Panc1 (cell line): ENCODE measurements at regions of chr16 and their contacts with region 1.

Region 1: GRCh38 chr16:53945996-53946395 is 242.0 kb downstream of the FTO start:
- DNase-seq: peak; percentile 5
- ATAC-seq: no peak
- H3K4me3 ChIP-seq: no peak overlapping the region
- H3K27ac ChIP-seq: no peak overlapping the region
- H3K4me1 ChIP-seq: no peaks in the 10 kb centered on the region
- H3K27me3 ChIP-seq: no peaks in the 10 kb centered on the region
- CTCF ChIP-seq: peak; percentile 65; the same call in 1 of the 2 replicates

Region 2: DNA sequence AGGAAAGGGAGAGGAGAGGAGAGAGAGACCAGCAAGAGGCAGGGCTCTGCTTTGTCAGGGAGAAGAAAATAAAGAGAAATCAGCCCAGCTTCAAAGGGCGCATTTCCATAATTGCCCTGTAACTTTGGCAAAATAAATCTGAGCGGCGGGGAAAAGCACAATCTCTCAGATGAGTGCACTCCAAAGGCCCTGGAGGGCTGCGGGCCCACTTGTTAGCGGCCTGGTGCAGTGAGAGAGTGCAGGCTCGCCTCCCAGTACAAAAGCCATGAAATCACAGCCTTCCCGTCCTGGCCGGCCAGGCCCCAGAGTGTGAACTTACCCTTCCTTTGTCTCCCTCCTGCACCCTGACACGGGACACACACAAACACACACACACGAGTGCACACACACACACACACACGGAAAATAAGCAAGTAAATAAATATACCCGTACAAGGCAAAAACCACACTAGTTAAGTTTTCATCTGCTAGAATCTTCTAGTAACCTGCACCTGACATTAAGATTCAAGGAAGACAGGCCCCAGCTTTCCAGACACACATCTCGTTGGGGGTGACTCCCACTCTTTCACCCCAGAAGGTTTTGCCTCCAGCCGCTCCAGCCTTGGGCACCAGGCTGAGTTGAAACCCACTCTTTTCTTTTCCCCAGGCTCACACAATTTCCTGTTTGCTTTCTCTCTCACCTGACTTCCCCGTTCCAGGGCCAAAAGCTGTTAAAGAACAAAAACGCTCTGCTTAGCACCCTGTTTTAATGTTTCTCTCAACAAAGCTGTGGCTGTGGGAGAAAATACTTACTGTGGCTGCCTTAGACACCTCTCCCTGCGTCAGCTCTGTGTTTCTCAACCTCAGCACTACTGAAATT is 332.1 kb after region 1 on chr16:
- CTCF ChIA-PET with region 1: interaction called, 3 read pairs
- POLR2A ChIA-PET with region 1: no interaction called
- in situ Hi-C with region 1: no loop called
- intact Hi-C with region 1: loop called (anchors 10 kb)
- DNase-seq: no peak
- ATAC-seq: no peak
- H3K4me3 ChIP-seq: no peak overlapping the region
- H3K27ac ChIP-seq: no peak overlapping the region
- H3K4me1 ChIP-seq: no peaks in the 10 kb centered on the region
- H3K27me3 ChIP-seq: no peaks in the 10 kb centered on the region
- CTCF ChIP-seq: no peak

Region 3: DNA sequence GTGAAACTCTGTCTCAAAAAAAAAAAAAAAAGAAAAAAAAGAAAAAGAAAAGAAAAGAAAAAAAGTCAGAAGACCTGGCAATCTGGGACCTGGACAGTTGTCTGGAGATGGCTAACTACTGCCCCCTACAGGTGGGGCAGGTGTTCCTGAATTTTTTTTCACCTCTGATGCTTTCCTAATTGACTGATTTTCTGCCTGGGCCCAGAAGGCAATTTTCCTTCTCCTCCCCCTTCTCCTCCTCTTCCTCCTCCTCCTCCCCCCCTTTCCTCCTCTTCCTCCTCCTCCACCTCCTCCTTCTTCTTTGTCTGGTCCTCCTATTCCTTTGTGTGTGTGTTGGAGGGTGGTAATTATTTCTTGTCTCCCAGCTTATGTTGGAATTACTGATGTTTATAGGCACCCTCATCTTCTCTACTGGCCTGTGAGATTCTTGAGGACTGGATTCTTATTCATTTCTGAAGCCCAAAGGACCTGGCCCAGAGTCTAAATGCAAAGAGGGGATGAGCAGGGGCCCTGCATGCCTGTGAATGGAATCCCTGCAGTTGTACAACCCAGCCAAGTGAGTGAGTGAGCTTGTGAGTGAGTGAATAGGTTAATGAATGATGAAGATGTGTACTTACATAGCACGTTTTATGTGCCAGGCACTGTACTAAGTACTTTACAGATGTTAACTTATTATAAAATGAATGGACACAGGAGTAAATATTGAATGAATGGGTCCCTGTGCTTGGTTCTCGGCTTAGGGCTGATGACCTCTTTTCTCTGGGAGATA is 1011.6 kb after region 1 on chr16:
- CTCF ChIA-PET with region 1: interaction called, 15 read pairs
- POLR2A ChIA-PET with region 1: no interaction called
- in situ Hi-C with region 1: no loop called
- intact Hi-C with region 1: no loop called
- DNase-seq: peak; percentile 18
- ATAC-seq: no peak
- H3K4me3 ChIP-seq: no peak overlapping the region
- H3K27ac ChIP-seq: no peak overlapping the region
- H3K4me1 ChIP-seq: no peaks in the 10 kb centered on the region
- H3K27me3 ChIP-seq: no peaks in the 10 kb centered on the region
- CTCF ChIP-seq: peak; percentile 79